ENCODE measurements at regions of chr2 and their contacts with region 1.

Region 1: GRCh38 chr2:43230351-43230885 is 4.0 kb upstream of the ZFP36L2 start:
- DNase-seq: no peak
- ATAC-seq: no peak
- H3K4me3 ChIP-seq: no peak overlapping the region
- H3K27ac ChIP-seq: no peak overlapping the region
- H3K4me1 ChIP-seq: peaks cover 25% of the 10 kb centered on the region
- H3K27me3 ChIP-seq: no peaks in the 10 kb centered on the region
- CTCF ChIP-seq: no peak
- POLR2A ChIP-seq: no peak

Region 2: DNA sequence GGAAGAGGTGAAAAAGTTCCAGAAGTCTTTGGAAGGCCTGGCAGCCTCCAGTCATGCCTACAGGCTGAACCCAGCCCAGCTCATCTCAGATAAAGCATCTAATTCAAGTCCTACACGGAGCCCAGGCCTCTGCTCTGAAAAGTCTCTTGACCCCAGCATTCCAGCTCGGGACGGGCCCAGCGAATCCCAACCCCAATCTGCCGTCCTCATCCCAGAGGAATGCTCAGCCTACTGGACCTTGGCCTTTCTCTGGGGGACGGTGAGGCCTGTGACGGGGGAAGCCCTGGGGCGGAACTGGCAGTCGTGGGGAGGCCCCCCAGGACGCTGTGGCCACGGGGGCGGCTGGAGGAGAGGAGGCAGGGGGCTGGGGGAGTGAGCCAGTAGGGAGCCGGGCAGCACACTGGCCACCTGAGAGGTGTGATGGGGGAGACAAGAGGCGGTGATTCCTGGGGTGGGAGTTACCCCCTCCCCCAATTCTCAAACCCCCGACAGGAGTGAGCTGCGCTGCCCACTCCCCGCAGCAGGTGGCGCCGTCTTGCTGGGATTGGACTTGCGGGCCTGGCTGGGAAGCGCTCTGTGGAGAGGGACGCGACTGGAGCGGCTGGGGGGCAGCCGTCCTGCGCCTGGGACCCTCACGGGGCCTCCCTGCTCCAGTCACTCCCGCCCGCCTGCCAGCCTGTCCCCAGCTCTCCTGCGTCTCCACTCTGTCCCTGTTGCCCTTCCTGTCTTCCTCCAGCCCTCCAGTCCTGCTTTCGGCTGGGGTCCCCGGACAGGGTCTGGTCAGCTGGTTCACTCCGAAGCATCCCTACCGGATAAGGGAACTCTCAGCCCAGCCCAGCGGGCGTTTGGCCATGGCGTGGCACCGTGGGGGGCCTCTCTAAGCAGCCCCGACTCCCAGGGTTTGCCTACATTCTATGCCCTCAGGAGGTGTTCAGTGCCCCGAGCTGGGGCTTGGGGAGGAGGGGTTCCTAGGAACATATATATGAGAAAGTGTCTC is 255.4 kb before region 1 on chr2:
- intact Hi-C with region 1: loop called (anchors 5 kb)
- DNase-seq: peak; percentile 74 to 85 (median 79)
- ATAC-seq: peak; percentile 43
- H3K4me3 ChIP-seq: no peak overlapping the region
- H3K27ac ChIP-seq: peak overlapping the region; percentile 8 to 78 (median 70)
- H3K4me1 ChIP-seq: peaks cover 57% of the 10 kb centered on the region
- H3K27me3 ChIP-seq: no peaks in the 10 kb centered on the region
- CTCF ChIP-seq: peak; percentile 79 to 98 (median 90)
- POLR2A ChIP-seq: peak in 2 of 3 donors; percentile 9 to 26

Region 3: GRCh38 chr2:43086451-43087221 is 143.8 kb before region 1 on chr2:
- intact Hi-C with region 1: no loop called
- DNase-seq: peak in 2 of 4 donors; percentile 51 to 68
- ATAC-seq: peak; percentile 76
- H3K4me3 ChIP-seq: no peak overlapping the region
- H3K27ac ChIP-seq: peak overlapping the region; percentile 50 to 69 (median 58)
- H3K4me1 ChIP-seq: peaks cover 29% of the 10 kb centered on the region
- H3K27me3 ChIP-seq: no peaks in the 10 kb centered on the region
- CTCF ChIP-seq: no peak
- POLR2A ChIP-seq: peak in 1 of 3 donors; percentile 14

Region 4: GRCh38 chr2:43343573-43344304 is 113.3 kb after region 1 on chr2:
- intact Hi-C with region 1: no loop called
- DNase-seq: peak; percentile 74 to 85 (median 82)
- ATAC-seq: peak; percentile 80
- H3K4me3 ChIP-seq: no peak overlapping the region
- H3K27ac ChIP-seq: peak overlapping the region in 3 of 4 donors; percentile 16 to 32 (median 26)
- H3K4me1 ChIP-seq: peaks cover 37% of the 10 kb centered on the region
- H3K27me3 ChIP-seq: no peaks in the 10 kb centered on the region
- CTCF ChIP-seq: no peak
- POLR2A ChIP-seq: no peak

Measured in body of pancreas (tissue), 4 donors.